ENCODE measurements at regions of chr20 and their contacts with region 1.

Region 1: DNA sequence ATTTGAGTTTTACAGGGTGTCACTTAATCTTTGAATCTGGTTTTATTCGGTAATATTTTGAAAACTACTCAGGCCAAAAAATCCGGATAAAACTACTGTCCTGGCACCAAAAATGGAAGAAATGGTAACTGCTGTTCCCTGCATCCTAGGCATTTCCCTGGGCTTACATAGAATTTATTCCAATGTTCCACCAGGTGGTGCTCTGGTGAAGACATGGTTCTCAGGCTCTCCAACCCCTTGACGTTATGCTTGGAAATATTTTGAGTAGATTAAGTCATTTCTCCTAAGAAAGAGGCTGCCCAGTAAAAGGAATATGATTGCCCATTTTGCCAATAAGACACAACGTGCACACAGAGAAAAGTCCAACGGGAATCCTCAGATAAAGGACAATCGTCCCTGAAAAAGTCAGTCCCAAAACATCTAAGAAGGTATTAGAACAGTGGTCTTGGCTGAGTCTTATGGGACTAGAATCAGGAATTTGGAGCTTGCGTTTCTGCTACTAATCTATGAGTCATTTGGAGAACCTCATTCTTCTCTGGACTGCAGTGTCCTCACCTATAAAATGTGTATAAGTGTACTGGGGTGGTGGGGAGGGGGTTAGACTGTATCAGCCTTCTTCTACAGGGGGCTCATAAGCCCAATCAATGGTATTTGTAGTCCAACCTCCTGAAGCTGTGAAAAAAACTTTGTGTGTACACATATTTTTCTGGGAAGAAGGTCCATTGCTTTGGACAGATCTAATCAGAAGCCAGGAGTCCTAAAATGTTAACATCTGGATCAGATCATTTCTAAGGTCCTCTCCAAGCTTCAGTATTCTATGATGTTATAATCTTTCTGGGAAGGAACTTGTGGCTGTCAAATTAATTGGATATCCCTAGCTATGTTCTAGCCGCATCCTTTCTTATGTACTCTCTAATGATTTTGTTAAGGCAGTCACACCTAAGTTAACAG is 131.0 kb upstream of the BMP2 start:
- DNase-seq: peak in 1 of 2 donors; percentile 22
- H3K4me3 ChIP-seq: no peak overlapping the region
- H3K27ac ChIP-seq: no peak overlapping the region
- H3K4me1 ChIP-seq: peaks cover 0 to 9% (median 0%) of the 10 kb centered on the region in 4 donors
- H3K27me3 ChIP-seq: no peaks in the 10 kb centered on the region
- CTCF ChIP-seq: peak; percentile 57 to 65

Region 2: GRCh38 chr20:5886788-5887187 is 749.7 kb before region 1 on chr20:
- intact Hi-C with region 1: loop called (anchors 10 kb)
- DNase-seq: no peak
- H3K4me3 ChIP-seq: no peak overlapping the region
- H3K27ac ChIP-seq: no peak overlapping the region
- H3K4me1 ChIP-seq: no peaks in the 10 kb centered on the region
- H3K27me3 ChIP-seq: peaks cover 0 to 3% of the 10 kb centered on the region in 2 donors
- CTCF ChIP-seq: no peak

Region 3: GRCh38 chr20:6265204-6265904 is 371.1 kb before region 1 on chr20:
- intact Hi-C with region 1: loop called (anchors 10 kb)
- DNase-seq: no peak
- H3K4me3 ChIP-seq: peak overlapping the region; percentile 12 to 21
- H3K27ac ChIP-seq: peak overlapping the region; percentile 46 to 64
- H3K4me1 ChIP-seq: peaks cover 0 to 22% (median 2%) of the 10 kb centered on the region in 4 donors
- H3K27me3 ChIP-seq: no peaks in the 10 kb centered on the region
- CTCF ChIP-seq: peak; percentile 38 to 44

Region 4: GRCh38 chr20:6767536-6768227 is 131.2 kb after region 1 on chr20 and contains the start of gene BMP2:
- intact Hi-C with region 1: loop called (anchors 10 kb)
- DNase-seq: peak; percentile 24 to 68
- H3K4me3 ChIP-seq: peak within 1 kb of the TSS; percentile 70 to 87
- H3K27ac ChIP-seq: peak within 1 kb of the TSS; percentile 69 to 74
- H3K4me1 ChIP-seq: peaks cover 0 to 36% (median 20%) of the 10 kb centered on the region in 4 donors
- H3K27me3 ChIP-seq: no peaks in the 10 kb centered on the region
- CTCF ChIP-seq: no peak

Region 5: GRCh38 chr20:6828794-6829423 is 192.4 kb after region 1 on chr20:
- intact Hi-C with region 1: loop called (anchors 10 kb)
- DNase-seq: peak in 1 of 2 donors; percentile 70
- H3K4me3 ChIP-seq: no peak overlapping the region
- H3K27ac ChIP-seq: no peak overlapping the region
- H3K4me1 ChIP-seq: no peaks in the 10 kb centered on the region
- H3K27me3 ChIP-seq: peaks cover 0 to 6% of the 10 kb centered on the region in 2 donors
- CTCF ChIP-seq: peak; percentile 51 to 61

Measured in tibial artery (tissue), 4 donors.